ENCODE measurements at regions of chr15 and their contacts with region 1.

Region 1: GRCh38 chr15:81155375-81156218 is 21.5 kb downstream of the CFAP161 start:
- DNase-seq: peak in 1 of 2 donors; percentile 45
- ATAC-seq: peak in 7 of 8 donors; percentile 31 to 60 (median 43)
- H3K4me3 ChIP-seq: no peak overlapping the region
- H3K27ac ChIP-seq: no peak overlapping the region
- H3K4me1 ChIP-seq: peaks cover 4 to 33% (median 10%) of the 10 kb centered on the region in 9 donors
- H3K27me3 ChIP-seq: peaks cover 0 to 4% (median 0%) of the 10 kb centered on the region in 7 donors
- CTCF ChIP-seq: peak; percentile 26 to 81 (median 65)

Region 2: DNA sequence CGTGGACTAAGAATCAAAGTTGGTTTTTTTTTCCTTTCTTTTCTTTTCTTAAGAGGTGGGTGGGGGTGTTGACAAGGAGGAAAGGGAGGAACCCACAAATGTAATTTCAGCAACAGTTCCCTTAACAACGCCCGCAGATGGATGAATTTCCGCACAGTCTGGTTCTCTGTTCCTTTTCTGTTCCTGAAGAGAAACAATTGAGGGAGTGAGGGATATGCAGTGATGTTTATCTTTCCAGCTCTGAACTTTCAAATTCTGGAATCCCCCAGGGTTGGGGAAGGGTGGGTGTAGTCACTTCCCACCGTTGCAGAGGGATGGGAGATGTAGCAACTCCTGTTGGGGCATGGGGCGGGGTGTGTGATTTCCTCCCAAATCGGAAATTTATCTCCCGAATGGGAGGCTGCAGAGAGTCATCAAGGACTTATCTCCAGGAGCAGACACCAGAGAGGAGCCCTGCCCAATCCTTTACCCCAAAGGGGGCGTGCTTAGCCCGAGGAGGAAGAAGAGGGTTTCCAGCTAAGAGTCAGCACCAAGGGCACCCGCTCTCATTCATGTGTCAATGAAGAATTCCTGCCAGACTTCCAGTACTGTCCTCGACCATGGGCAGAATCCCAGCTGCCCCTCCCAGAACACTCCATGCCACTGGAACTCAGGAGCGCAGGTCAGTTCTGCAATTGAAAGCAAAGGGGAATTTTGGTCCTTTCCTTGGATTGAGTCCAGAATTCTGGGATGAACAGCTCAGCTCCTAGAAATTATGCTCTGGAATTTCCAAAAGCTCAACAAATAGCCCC is 56.5 kb before region 1 on chr15:
- intact Hi-C with region 1: loop called in 3 of 10 experiments (anchors 5 to 10 kb)
- DNase-seq: peak; percentile 44 to 75
- ATAC-seq: peak; percentile 74 to 91 (median 85)
- H3K4me3 ChIP-seq: peak overlapping the region in 7 of 10 donors; percentile 4 to 28 (median 13)
- H3K27ac ChIP-seq: peak overlapping the region in 9 of 10 donors; percentile 27 to 81 (median 62)
- H3K4me1 ChIP-seq: peaks cover 0 to 58% (median 31%) of the 10 kb centered on the region in 9 donors
- H3K27me3 ChIP-seq: no peaks in the 10 kb centered on the region
- CTCF ChIP-seq: no peak

Region 3: GRCh38 chr15:81111510-81112470 is 43.8 kb before region 1 on chr15:
- intact Hi-C with region 1: loop called in 3 of 10 experiments (anchors 5 to 10 kb)
- DNase-seq: no peak
- ATAC-seq: no peak
- H3K4me3 ChIP-seq: no peak overlapping the region
- H3K27ac ChIP-seq: no peak overlapping the region
- H3K4me1 ChIP-seq: peaks cover 0 to 42% (median 5%) of the 10 kb centered on the region in 9 donors
- H3K27me3 ChIP-seq: peaks cover 0 to 6% (median 0%) of the 10 kb centered on the region in 7 donors
- CTCF ChIP-seq: no peak

Region 4: DNA sequence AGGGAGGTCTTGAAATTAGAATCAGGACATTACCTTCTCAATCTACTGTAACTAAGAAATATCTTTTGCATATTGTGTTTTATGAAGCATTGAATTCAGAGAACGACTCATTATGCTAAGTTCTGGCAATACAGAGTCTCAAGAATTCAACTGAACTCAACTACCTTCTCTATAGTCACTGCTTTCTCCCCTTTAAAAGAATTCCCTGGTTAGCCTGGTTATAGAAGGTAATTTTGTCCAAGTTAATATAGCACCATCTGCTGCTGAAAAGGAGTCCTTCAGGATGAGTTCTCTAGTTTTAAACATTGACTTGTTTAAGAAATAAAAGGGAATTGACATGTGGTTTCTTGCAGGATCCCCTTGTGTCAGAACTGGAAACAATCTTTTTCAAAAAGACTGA is 101.3 kb after region 1 on chr15:
- intact Hi-C with region 1: loop called in 2 of 10 experiments (anchors 2 kb)
- DNase-seq: no peak
- ATAC-seq: peak in 7 of 8 donors; percentile 55 to 78 (median 65)
- H3K4me3 ChIP-seq: no peak overlapping the region
- H3K27ac ChIP-seq: no peak overlapping the region
- H3K4me1 ChIP-seq: peaks cover 0 to 22% (median 0%) of the 10 kb centered on the region in 9 donors
- H3K27me3 ChIP-seq: peaks cover 0 to 4% (median 0%) of the 10 kb centered on the region in 7 donors
- CTCF ChIP-seq: peak; percentile 12 to 65 (median 56)

Region 5: GRCh38 chr15:82985688-82986441 is 1830.3 kb after region 1 on chr15 and contains the start of gene RAMAC:
- intact Hi-C with region 1: loop called in 1 of 10 experiments (anchors 10 kb)
- DNase-seq: peak; percentile 85 to 95
- ATAC-seq: peak; percentile 97 to 99 (median 98)
- H3K4me3 ChIP-seq: peak within 1 kb of the TSS; percentile 65 to 95 (median 76)
- H3K27ac ChIP-seq: peak within 1 kb of the TSS; percentile 10 to 91 (median 75)
- H3K4me1 ChIP-seq: peaks cover 3 to 21% (median 15%) of the 10 kb centered on the region in 9 donors
- H3K27me3 ChIP-seq: no peaks in the 10 kb centered on the region
- CTCF ChIP-seq: no peak
- total RNA-seq, gene RAMAC: 12.4 to 17.8 (median 14.4) TPM